A549 (cell line): ENCODE measurements at regions of chr12 and their contacts with region 1.

Region 1: DNA sequence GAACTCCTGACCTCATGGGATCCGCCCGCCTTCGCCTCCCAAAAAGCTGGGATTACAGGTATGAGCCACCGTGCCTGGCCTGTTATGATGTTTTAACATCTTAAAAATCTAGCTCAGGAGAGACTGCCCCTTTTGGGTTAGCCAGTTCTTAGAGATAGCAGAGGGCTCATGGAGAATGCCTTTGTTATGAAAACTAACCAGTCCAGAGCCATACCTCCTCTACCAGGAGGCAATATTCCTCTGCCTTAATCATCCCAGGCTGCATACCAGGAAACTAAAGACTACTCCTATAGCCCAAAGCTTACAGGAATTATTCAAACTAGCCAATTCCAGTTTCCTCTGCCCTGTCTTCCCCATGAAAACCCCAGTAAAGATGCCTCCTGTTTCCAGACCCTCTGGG is 96.0 kb upstream of the MDM1 start:
- DNase-seq: no peak
- ATAC-seq: no peak
- H3K4me3 ChIP-seq: no peak overlapping the region
- H3K27ac ChIP-seq: no peak overlapping the region
- H3K4me1 ChIP-seq: no peaks in the 10 kb centered on the region
- CTCF ChIP-seq: no peak
- EP300 ChIP-seq: no peak
- POLR2A ChIP-seq: no peak
- RAD21 ChIP-seq: no peak

Region 2: GRCh38 chr12:68345763-68346162 is 82.4 kb before region 1 on chr12:
- CTCF ChIA-PET with region 1: no interaction called
- POLR2A ChIA-PET with region 1: no interaction called
- DNase-seq: no peak
- ATAC-seq: no peak
- H3K4me3 ChIP-seq: no peak overlapping the region
- H3K27ac ChIP-seq: no peak overlapping the region
- H3K4me1 ChIP-seq: peaks cover under 1% of the 10 kb centered on the region; the same call in 1 of the 3 replicates
- CTCF ChIP-seq: no peak
- EP300 ChIP-seq: no peak
- POLR2A ChIP-seq: no peak
- RAD21 ChIP-seq: no peak

Region 3: GRCh38 chr12:68675101-68675842 is 247.1 kb after region 1 on chr12:
- CTCF ChIA-PET with region 1: no interaction called
- POLR2A ChIA-PET with region 1: interaction called, 10 read pairs
- DNase-seq: no peak
- ATAC-seq: no peak
- H3K4me3 ChIP-seq: no peak overlapping the region
- H3K27ac ChIP-seq: peak overlapping the region in 1 of 2 experiments; percentile 38; a peak in 1 of 6 replicates
- H3K4me1 ChIP-seq: peaks cover 7% of the 10 kb centered on the region
- CTCF ChIP-seq: no peak
- EP300 ChIP-seq: no peak
- POLR2A ChIP-seq: no peak
- RAD21 ChIP-seq: no peak